ENCODE measurements at regions of chr16 and their contacts with region 1.

Region 1: DNA sequence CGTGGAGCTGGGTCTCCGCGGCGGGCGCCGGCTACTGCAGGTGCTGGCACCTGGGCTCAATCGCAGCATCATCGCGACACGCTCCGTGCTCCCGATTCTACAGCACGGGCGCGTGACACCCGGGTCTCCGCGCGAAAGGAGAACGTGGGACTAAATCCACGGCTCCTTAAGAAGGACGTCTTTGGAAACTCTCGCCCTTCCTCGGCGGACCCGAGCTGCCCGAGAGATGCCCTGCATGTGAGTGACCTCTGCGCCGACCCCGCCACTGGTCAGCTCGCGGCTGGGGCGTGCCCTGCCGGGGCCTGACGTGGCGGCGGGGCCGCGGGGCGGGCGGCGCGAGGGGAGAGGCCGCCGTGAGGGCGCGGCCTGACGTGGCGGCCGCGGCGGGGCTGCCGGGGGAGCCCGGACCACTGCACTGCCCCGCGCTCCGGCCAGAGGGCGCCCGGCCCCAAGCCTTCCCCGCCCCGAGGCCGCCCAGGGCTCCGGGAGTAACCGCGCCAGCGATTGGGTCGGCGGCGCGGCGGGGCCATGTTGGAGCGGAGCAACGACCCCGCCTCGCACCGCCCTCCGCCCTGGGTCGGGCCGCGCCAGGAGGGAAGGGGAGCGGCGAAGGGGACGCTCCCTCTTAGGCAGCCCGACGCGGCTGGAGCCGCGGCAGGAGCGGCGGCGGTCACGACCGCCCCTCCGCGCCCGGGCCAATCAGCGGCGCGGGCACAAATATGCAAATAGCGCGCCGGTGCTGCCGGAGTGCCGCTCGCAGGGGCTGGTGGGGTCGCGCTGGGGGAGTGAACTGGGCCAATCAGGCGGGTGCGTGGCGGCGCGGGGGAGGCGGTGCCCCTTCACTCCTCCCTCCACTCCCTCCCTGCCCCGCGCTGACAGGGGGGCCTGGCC is 75.6 kb downstream of the CHD9 start:
- DNase-seq: peak; percentile 94
- H3K4me3 ChIP-seq: peak overlapping the region; percentile 60 to 83 (median 68)
- H3K27ac ChIP-seq: peak overlapping the region; percentile 78
- H3K4me1 ChIP-seq: peaks cover 15% of the 10 kb centered on the region
- H3K27me3 ChIP-seq: no peaks in the 10 kb centered on the region
- CTCF ChIP-seq: peak; percentile 15 to 49

Region 2: GRCh38 chr16:53080345-53081031 is 49.9 kb before region 1 on chr16:
- CTCF ChIA-PET with region 1: interaction called, 3 read pairs
- dilution Hi-C with region 1: no loop called
- in situ Hi-C with region 1: no loop called
- intact Hi-C with region 1: loop called (anchors 1 kb)
- DNase-seq: peak; percentile 91
- H3K4me3 ChIP-seq: peak overlapping the region in 2 of 3 experiments; percentile 3 to 13
- H3K27ac ChIP-seq: peak overlapping the region; percentile 64
- H3K4me1 ChIP-seq: peaks cover 63% of the 10 kb centered on the region
- H3K27me3 ChIP-seq: no peaks in the 10 kb centered on the region
- CTCF ChIP-seq: no peak

Region 3: DNA sequence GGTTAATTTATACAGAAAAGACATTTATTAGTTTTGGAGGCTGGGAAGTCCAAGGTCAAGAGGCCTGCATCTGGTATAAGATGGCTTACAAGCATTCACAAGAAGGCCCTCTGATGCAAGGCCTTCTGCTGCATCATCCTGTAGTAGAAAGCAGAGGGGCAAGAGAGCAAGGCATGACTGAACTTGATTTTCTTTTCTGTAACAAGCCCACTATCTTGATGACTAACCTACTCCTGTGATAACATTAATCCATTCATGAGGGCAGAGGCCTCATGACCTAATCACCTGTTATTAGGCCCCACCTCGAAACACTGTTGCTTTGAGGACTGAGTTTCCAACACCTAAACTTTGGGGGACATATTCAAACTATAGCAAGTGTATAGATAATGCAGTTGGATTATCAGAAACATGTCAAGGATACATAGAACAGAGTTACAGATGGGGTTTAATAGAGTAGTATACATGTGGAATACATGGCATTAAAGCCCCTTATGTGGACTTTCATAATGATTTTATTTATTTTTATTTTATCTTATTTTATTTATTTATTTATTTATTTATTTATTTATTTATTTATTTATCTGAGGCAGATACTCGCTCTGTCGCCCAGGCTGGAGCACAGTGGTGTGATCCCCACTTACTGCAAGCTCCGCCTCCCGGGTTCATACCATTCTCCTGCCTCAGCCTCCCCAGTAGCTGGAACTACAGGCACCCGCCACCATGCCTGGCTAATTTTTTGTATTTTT is 12.6 kb after region 1 on chr16:
- CTCF ChIA-PET with region 1: no interaction called
- dilution Hi-C with region 1: no loop called
- in situ Hi-C with region 1: no loop called
- intact Hi-C with region 1: no loop called
- DNase-seq: peak; percentile 87
- H3K4me3 ChIP-seq: no peak overlapping the region
- H3K27ac ChIP-seq: peak overlapping the region; percentile 82
- H3K4me1 ChIP-seq: peaks cover 24% of the 10 kb centered on the region
- H3K27me3 ChIP-seq: no peaks in the 10 kb centered on the region
- CTCF ChIP-seq: no peak

Region 4: DNA sequence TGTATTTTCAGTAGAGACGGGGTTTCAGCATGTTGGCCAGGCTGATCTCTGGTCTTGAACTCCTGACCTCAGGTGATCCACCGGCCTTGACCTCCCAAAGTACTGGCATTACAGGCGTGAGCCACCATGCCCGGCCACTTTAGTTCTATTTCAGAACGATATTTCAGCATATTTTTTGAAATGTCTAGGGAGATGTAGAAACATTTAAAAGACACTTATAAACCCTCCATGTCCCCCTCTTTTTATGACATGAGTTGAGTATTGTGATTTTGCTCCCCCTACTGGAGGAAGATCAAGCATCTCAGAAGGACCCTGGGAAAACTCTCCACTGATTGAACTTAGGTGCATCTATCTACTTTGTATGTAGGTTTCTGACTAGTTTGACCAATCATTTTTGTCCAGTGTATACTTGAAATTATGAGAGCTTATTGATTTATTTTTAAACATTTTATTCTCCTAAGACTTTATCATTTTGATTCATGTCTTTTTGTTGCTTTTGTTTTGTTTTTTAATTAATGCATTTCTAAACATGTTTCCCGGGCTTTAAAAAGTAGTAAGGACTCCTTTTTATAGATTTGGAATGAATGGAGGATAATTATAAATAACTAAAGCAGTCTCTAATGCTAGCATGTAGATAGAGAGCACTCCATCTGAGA is 29.5 kb after region 1 on chr16:
- CTCF ChIA-PET with region 1: no interaction called
- dilution Hi-C with region 1: no loop called
- in situ Hi-C with region 1: no loop called
- intact Hi-C with region 1: loop called (anchors 1 kb)
- DNase-seq: peak; percentile 32
- H3K4me3 ChIP-seq: no peak overlapping the region
- H3K27ac ChIP-seq: no peak overlapping the region
- H3K4me1 ChIP-seq: no peaks in the 10 kb centered on the region
- H3K27me3 ChIP-seq: no peaks in the 10 kb centered on the region
- CTCF ChIP-seq: peak; percentile 64 to 70

Region 5: DNA sequence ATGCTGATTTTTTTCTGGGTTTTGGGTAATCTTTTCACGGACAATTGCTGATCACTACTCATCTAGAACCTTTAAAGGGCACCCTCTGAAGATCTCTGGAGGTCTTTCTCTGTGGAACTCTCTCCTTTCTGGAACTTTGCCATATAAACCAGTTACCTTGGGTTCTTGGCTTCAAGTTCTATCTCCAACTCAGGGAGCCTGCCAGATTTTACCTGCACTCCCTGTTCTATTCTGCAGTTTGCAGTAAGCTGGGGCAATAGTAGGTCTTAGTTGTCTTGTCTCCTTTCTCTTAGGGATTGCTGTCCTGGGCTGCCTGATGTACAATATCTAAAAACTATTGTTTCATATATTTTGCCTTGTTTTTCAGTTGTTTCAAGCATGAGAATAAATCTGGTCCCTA is 44.7 kb after region 1 on chr16:
- CTCF ChIA-PET with region 1: no interaction called
- dilution Hi-C with region 1: no loop called
- in situ Hi-C with region 1: no loop called
- intact Hi-C with region 1: no loop called
- DNase-seq: no peak
- H3K4me3 ChIP-seq: no peak overlapping the region
- H3K27ac ChIP-seq: no peak overlapping the region
- H3K4me1 ChIP-seq: no peaks in the 10 kb centered on the region
- H3K27me3 ChIP-seq: no peaks in the 10 kb centered on the region
- CTCF ChIP-seq: no peak

Region 6: DNA sequence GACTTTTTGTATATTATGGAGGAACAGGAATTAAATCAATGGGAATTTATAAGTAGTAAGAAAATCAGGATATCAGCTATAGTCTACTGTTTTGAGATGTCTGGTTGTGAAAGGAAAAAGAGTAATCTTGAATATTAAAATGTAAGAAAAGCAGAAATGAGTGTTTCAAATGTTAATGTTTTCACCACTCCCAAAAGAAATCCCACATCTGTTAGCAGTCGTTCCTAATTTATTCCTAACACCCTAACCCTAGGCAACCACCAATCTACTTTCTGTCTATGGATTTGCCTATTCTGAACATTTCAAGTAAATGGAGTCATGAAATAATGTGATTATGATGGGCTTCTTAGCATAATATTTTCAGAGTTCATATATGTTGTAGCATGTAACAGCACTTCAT is 57.4 kb after region 1 on chr16:
- CTCF ChIA-PET with region 1: no interaction called
- dilution Hi-C with region 1: no loop called
- in situ Hi-C with region 1: no loop called
- intact Hi-C with region 1: no loop called
- DNase-seq: no peak
- H3K4me3 ChIP-seq: no peak overlapping the region
- H3K27ac ChIP-seq: no peak overlapping the region
- H3K4me1 ChIP-seq: no peaks in the 10 kb centered on the region
- H3K27me3 ChIP-seq: no peaks in the 10 kb centered on the region
- CTCF ChIP-seq: no peak

Region 7: GRCh38 chr16:53282975-53283946 is 152.9 kb after region 1 on chr16:
- CTCF ChIA-PET with region 1: interaction called, 3 read pairs
- dilution Hi-C with region 1: no loop called
- in situ Hi-C with region 1: no loop called
- intact Hi-C with region 1: loop called (anchors 10 kb)
- DNase-seq: peak; percentile 38
- H3K4me3 ChIP-seq: no peak overlapping the region
- H3K27ac ChIP-seq: no peak overlapping the region
- H3K4me1 ChIP-seq: no peaks in the 10 kb centered on the region
- H3K27me3 ChIP-seq: no peaks in the 10 kb centered on the region
- CTCF ChIP-seq: peak; percentile 64 to 69